Heart left ventricle (tissue), 16 donors: ENCODE measurements at regions of chr9 and their contacts with region 1.

Region 1: GRCh38 chr9:99299211-99300102 is 77.4 kb downstream of the SEC61B start:
- DNase-seq: no peak
- ATAC-seq: peak in 3 of 4 donors; percentile 16 to 49 (median 23)
- H3K4me3 ChIP-seq: no peak overlapping the region
- H3K27ac ChIP-seq: no peak overlapping the region
- H3K4me1 ChIP-seq: no peaks in the 10 kb centered on the region
- H3K27me3 ChIP-seq: no peaks in the 10 kb centered on the region
- CTCF ChIP-seq: peak in 9 of 12 donors; percentile 23 to 53 (median 35)
- POLR2A ChIP-seq: no peak

Region 2: DNA sequence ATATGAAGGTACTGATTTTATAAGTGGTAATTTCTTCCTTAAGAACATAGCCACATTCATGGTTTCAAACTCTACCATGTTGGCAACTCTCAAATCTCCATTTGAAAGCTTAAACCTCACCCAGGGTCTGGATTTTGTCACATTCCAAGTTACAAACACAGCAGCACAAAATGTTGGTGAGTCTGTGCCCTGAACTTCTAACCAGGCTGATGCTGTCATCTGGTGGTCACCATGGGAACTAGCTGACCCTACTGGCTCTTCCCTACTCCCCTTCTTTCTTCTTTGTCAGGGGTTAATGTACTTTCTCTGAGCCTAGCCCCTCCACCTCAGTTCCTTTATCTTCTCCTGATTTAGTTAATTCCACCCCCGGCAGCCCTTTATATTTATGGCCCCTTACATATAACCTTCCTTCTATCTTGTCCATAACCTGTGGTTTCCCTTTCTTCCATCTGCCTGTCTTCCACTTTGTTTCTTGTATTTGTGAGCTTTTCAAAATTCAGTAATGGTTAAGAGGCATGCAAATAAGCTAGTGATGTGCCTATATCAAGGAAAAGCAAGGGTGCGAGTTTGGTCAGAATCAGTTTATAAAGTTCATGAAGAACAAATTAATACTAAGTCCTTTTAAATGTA is 158.7 kb before region 1 on chr9:
- intact Hi-C with region 1: no loop called
- DNase-seq: peak in 4 of 5 donors; percentile 31 to 49 (median 36)
- ATAC-seq: peak in 3 of 4 donors; percentile 85 to 90 (median 89)
- H3K4me3 ChIP-seq: no peak overlapping the region
- H3K27ac ChIP-seq: peak overlapping the region in 3 of 12 donors; percentile 10 to 48 (median 23)
- H3K4me1 ChIP-seq: peaks cover 0 to 47% (median 6%) of the 10 kb centered on the region in 12 donors
- H3K27me3 ChIP-seq: no peaks in the 10 kb centered on the region
- CTCF ChIP-seq: peak; percentile 75 to 95 (median 88)
- POLR2A ChIP-seq: no peak

Region 3: GRCh38 chr9:99211741-99212140 is 87.7 kb before region 1 on chr9:
- intact Hi-C with region 1: no loop called
- DNase-seq: no peak
- ATAC-seq: peak in 2 of 4 donors; percentile 26 to 49
- H3K4me3 ChIP-seq: no peak overlapping the region
- H3K27ac ChIP-seq: no peak overlapping the region
- H3K4me1 ChIP-seq: peaks cover 0 to 5% (median 0%) of the 10 kb centered on the region in 12 donors
- H3K27me3 ChIP-seq: no peaks in the 10 kb centered on the region
- CTCF ChIP-seq: no peak
- POLR2A ChIP-seq: no peak

Region 4: GRCh38 chr9:99244344-99245260 is 54.9 kb before region 1 on chr9:
- intact Hi-C with region 1: loop called in 1 of 10 experiments (anchors 10 kb)
- DNase-seq: no peak
- ATAC-seq: no peak
- H3K4me3 ChIP-seq: no peak overlapping the region
- H3K27ac ChIP-seq: no peak overlapping the region
- H3K4me1 ChIP-seq: peaks cover 0 to 18% (median 4%) of the 10 kb centered on the region in 12 donors
- H3K27me3 ChIP-seq: no peaks in the 10 kb centered on the region
- CTCF ChIP-seq: no peak
- POLR2A ChIP-seq: no peak

Region 5: DNA sequence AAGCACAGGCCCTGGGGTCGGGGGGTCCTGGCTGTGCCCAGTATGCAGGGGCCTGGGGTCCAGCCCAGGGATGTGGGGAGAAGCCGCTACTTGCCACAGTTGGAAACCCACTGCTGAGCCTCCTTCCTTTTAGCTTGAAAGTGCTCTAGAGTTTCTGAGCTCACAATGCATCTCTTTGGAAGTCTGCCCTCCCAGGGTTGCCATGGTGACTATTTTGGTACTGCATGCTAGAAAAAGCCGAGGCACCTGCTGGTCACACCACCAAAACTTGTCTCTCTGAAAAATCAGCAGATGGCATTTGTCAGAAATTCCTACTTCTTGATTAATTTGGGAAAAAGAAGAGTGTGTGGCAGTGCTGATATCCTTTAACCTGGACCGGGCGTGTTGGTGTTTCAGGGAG is 74.5 kb after region 1 on chr9:
- intact Hi-C with region 1: loop called in 1 of 10 experiments (anchors 5 kb)
- DNase-seq: no peak
- ATAC-seq: no peak
- H3K4me3 ChIP-seq: no peak overlapping the region
- H3K27ac ChIP-seq: no peak overlapping the region
- H3K4me1 ChIP-seq: peaks cover 0 to 8% (median 4%) of the 10 kb centered on the region in 12 donors
- H3K27me3 ChIP-seq: no peaks in the 10 kb centered on the region
- CTCF ChIP-seq: no peak
- POLR2A ChIP-seq: no peak